ENCODE measurements at regions of chr19 and their contacts with region 1.

Region 1: GRCh38 chr19:18919086-18919899 is at the starts of genes COPE and DDX49:
- DNase-seq: peak; percentile 100
- ATAC-seq: peak; percentile 97
- H3K4me3 ChIP-seq: peak within 1 kb of the TSS; percentile 99
- H3K27ac ChIP-seq: peak within 1 kb of the TSS; percentile 95
- H3K4me1 ChIP-seq: peaks cover 8% of the 10 kb centered on the region
- H3K27me3 ChIP-seq: no peaks in the 10 kb centered on the region
- CTCF ChIP-seq: no peak
- EP300 ChIP-seq: peak in 1 of 2 experiments; percentile 35; a peak in 1 of 4 replicates
- POLR2A ChIP-seq: peak; percentile 94
- RAD21 ChIP-seq: no peak
- polyA plus RNA-seq, gene COPE: 3.5 to 17.8 TPM
- polyA plus RNA-seq, gene DDX49: 0.58 to 5.5 TPM

Region 2: GRCh38 chr19:18636183-18636968 is 282.9 kb before region 1 on chr19:
- CTCF ChIA-PET with region 1: no interaction called
- POLR2A ChIA-PET with region 1: no interaction called
- RAD21 ChIA-PET with region 1: no interaction called
- SMC1A ChIA-PET with region 1: no interaction called
- in situ Hi-C with region 1: no loop called
- intact Hi-C with region 1: loop called (anchors 2 kb)
- DNase-seq: peak; percentile 83
- ATAC-seq: peak; percentile 96
- H3K4me3 ChIP-seq: peak overlapping the region; percentile 72
- H3K27ac ChIP-seq: peak overlapping the region; percentile 31; the same call in 1 of the 2 replicates
- H3K4me1 ChIP-seq: peaks cover 9% of the 10 kb centered on the region
- H3K27me3 ChIP-seq: no peaks in the 10 kb centered on the region
- CTCF ChIP-seq: no peak
- EP300 ChIP-seq: no peak
- POLR2A ChIP-seq: no peak
- RAD21 ChIP-seq: no peak

Region 3: GRCh38 chr19:18961767-18962620 is 42.7 kb after region 1 on chr19:
- CTCF ChIA-PET with region 1: no interaction called
- POLR2A ChIA-PET with region 1: no interaction called
- RAD21 ChIA-PET with region 1: no interaction called
- SMC1A ChIA-PET with region 1: no interaction called
- in situ Hi-C with region 1: no loop called
- intact Hi-C with region 1: no loop called
- DNase-seq: no peak
- ATAC-seq: peak; percentile 21; the same call in 1 of the 3 replicates
- H3K4me3 ChIP-seq: no peak overlapping the region
- H3K27ac ChIP-seq: no peak overlapping the region
- H3K4me1 ChIP-seq: no peaks in the 10 kb centered on the region
- H3K27me3 ChIP-seq: no peaks in the 10 kb centered on the region
- CTCF ChIP-seq: no peak
- EP300 ChIP-seq: no peak
- POLR2A ChIP-seq: no peak
- RAD21 ChIP-seq: no peak

Region 4: DNA sequence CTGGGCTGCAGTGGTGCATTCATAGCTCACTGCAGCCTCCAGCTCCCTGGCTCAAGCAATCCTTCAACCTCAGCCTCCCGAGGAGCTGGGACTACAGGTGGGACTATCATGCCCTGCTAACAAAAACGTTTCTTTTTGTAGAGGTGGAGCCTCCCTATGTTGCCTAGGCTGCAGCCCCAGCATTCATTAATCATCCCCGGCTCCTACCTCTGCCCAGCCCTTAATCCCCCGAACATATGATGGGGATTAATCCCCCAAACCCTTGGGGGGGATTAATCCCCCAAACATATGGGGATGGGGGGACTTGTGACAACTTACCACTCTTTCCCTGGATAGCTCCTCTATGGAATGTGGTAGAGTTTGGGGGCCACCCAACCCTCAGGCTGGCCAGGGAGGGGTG is 68.2 kb after region 1 on chr19:
- CTCF ChIA-PET with region 1: interaction called, 10 read pairs
- POLR2A ChIA-PET with region 1: interaction called, 3 read pairs
- RAD21 ChIA-PET with region 1: interaction called, 10 read pairs
- SMC1A ChIA-PET with region 1: interaction called, 7 read pairs
- in situ Hi-C with region 1: no loop called
- intact Hi-C with region 1: no loop called
- DNase-seq: no peak
- ATAC-seq: no peak
- H3K4me3 ChIP-seq: no peak overlapping the region
- H3K27ac ChIP-seq: no peak overlapping the region
- H3K4me1 ChIP-seq: no peaks in the 10 kb centered on the region
- H3K27me3 ChIP-seq: peaks cover 0 to 4% of the 10 kb centered on the region in 2 experiments; a peak in 2 of 4 replicates
- CTCF ChIP-seq: no peak
- EP300 ChIP-seq: no peak
- POLR2A ChIP-seq: no peak
- RAD21 ChIP-seq: no peak